ENCODE measurements at regions of chr10 and their contacts with region 1.

Region 1: DNA sequence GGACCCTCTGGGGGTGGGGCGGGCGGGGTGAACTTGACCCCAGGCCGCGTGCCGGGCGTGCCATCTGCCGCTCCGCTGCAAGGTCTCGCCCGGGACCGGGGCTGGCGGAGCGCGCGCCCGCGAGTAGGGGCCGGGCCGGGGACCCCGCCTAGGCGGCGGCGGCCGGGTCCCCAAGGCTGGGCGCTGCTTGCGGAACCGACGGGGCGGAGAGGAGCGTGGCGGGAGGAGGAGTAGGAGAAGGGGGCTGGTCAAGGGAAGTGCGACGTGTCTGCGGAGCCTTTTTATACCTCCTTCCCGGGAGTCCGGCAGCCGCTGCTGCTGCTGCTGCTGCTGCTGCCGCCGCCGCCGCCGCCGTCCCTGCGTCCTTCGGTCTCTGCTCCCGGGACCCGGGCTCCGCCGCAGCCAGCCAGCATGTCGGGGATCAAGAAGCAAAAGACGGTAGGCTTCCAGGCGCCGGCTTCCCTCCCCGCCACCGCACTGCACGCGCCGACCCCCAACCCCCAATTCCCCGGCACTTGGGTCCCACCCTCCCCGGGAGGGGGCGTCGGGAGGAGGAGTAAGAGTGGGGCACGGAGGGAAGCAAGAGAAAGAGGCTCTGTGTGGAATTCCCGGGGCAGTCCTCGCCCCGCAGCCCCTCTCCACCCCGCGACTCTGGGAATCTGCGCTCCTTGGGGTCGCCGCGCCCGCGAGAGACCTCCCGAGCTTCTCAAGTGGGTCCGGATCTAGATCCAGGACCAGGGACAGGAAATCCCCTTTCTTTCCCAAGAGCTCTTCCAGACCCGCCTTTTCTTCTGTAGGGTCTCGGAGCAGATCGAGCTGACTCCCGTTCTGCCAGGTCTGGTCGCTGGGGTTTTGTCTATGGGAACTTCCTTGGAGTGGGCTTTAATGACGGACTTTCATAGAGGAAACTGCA is at the start of gene PAPSS2:
- DNase-seq: peak; percentile 34
- H3K4me3 Mint-ChIP-seq: peak within 1 kb of the TSS; percentile 66
- H3K27ac Mint-ChIP-seq: no peak within 1 kb of the TSS
- H3K4me1 Mint-ChIP-seq: peaks cover 13% of the 10 kb centered on the region
- H3K27me3 Mint-ChIP-seq: peaks cover 53% of the 10 kb centered on the region
- total RNA-seq, gene PAPSS2: 0.22 to 0.40 TPM

Region 2: DNA sequence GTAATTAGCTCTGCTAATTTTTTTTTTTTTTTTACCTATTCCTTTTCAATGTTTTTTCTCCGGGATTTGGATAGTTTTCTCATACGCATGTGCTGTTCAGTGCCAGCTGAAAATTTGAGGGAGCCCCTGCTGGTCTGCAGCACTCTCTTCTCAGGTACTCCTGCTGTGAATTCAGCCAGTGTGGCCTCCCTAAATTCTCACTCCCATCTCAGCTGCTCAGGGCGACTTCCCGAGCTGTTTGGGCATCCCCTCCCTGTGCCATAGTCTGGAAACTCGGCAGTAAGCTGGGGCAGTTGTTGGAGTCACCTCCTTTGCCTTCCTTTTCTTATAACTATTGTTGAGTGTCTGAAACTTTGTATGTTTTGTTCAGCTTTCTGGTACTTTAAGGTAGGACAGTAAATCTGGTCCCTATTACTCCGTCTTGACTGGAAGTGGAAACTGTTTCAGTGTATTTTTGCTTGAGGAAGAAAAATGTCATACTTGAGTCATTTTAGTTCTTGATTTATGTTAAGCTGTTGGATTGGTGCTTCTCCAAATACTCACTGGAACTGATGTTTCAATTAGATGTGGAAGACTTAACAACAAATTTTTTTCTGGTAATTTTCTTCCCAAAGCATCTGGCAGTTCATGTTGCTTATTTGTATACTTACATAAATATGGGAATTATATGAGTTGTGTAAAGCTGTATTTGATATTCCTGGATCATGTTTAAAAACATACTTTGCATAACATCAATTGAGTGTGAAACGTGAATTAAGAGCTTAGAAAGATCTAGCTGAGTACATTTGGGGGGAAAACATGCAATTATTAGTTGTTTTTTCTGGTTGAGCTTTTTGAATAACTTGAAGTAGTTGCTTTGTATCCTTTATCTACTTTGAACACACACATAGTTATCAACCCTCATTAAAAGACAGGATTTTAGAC is 121.5 kb before region 1 on chr10:
- CTCF ChIA-PET with region 1: no interaction called
- POLR2A ChIA-PET with region 1: no interaction called
- intact Hi-C with region 1: loop called (anchors 5 kb)
- DNase-seq: no peak
- H3K4me3 Mint-ChIP-seq: no peak overlapping the region
- H3K27ac Mint-ChIP-seq: no peak overlapping the region
- H3K4me1 Mint-ChIP-seq: peaks cover 22% of the 10 kb centered on the region
- H3K27me3 Mint-ChIP-seq: no peaks in the 10 kb centered on the region

Region 3: DNA sequence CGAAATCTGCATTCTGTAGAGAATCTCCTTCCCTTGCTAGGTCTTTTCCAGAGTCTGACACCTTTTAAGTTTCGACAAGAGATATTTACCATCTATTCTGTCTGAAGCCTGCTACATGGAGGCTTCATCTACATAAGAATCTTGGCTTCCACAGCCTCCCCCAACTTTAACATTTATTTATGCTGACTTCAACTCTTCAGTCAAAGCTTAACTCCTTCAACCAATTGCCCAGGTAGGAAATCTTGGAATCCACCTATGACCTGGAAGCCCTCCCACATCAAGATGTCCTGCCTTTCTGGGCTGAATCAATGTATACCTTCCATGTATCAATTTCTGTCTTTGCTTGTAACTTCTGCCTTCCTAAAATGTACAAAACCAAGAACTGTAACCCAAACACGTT is 100.4 kb before region 1 on chr10:
- CTCF ChIA-PET with region 1: no interaction called
- POLR2A ChIA-PET with region 1: no interaction called
- intact Hi-C with region 1: no loop called
- DNase-seq: no peak
- H3K4me3 Mint-ChIP-seq: no peak overlapping the region
- H3K27ac Mint-ChIP-seq: no peak overlapping the region
- H3K4me1 Mint-ChIP-seq: no peaks in the 10 kb centered on the region
- H3K27me3 Mint-ChIP-seq: peaks cover 8% of the 10 kb centered on the region

Region 4: DNA sequence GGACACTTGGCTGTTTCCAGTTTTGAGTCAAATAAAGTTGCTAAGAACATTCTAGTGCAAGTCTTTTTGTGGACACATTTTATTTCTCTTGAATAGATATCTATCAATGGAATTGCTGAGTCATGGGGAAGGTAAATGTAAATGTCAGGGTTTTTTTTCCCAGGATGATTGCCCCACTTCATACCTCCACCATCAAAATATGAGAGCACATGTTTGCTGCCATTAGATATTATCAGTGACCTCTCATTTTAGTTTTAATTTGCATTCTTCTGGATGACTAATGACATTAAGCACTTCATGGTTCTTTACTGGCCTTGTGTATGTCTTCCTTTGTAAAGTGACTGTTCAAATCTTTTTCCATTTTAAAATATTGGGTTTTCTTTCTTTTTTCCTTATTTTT is 45.5 kb after region 1 on chr10:
- CTCF ChIA-PET with region 1: no interaction called
- POLR2A ChIA-PET with region 1: no interaction called
- intact Hi-C with region 1: no loop called
- DNase-seq: no peak
- H3K4me3 Mint-ChIP-seq: no peak overlapping the region
- H3K27ac Mint-ChIP-seq: no peak overlapping the region
- H3K4me1 Mint-ChIP-seq: no peaks in the 10 kb centered on the region
- H3K27me3 Mint-ChIP-seq: peaks cover 3% of the 10 kb centered on the region

Region 5: GRCh38 chr10:87734987-87735827 is 75.4 kb after region 1 on chr10:
- CTCF ChIA-PET with region 1: interaction called, 3 read pairs
- POLR2A ChIA-PET with region 1: no interaction called
- intact Hi-C with region 1: loop called (anchors 1 kb)
- DNase-seq: no peak
- H3K4me3 Mint-ChIP-seq: no peak overlapping the region
- H3K27ac Mint-ChIP-seq: no peak overlapping the region
- H3K4me1 Mint-ChIP-seq: no peaks in the 10 kb centered on the region
- H3K27me3 Mint-ChIP-seq: peaks cover 23% of the 10 kb centered on the region

Region 6: GRCh38 chr10:87771871-87772500 is 112.2 kb after region 1 on chr10:
- CTCF ChIA-PET with region 1: interaction called, 8 read pairs
- POLR2A ChIA-PET with region 1: no interaction called
- intact Hi-C with region 1: loop called (anchors 1 kb)
- DNase-seq: no peak
- H3K4me3 Mint-ChIP-seq: no peak overlapping the region
- H3K27ac Mint-ChIP-seq: no peak overlapping the region
- H3K4me1 Mint-ChIP-seq: peaks cover 7% of the 10 kb centered on the region
- H3K27me3 Mint-ChIP-seq: no peaks in the 10 kb centered on the region

Measured in activated CD4-positive, alpha-beta memory T cell treated with anti-CD3 and anti-CD28 coated beads for 36 hours (primary cell).